Sciatic nerve (tissue), 2 donors: ENCODE measurements at regions of chr15 and their contacts with region 1.

Region 1: GRCh38 chr15:89760303-89761008 is 9.4 kb upstream of the MESP1 start:
- DNase-seq: peak; percentile 89
- ATAC-seq: peak; percentile 91

Region 2: GRCh38 chr15:88701561-88702095 is 1058.8 kb before region 1 on chr15:
- intact Hi-C with region 1: no loop called
- DNase-seq: no peak
- ATAC-seq: no peak

Region 3: DNA sequence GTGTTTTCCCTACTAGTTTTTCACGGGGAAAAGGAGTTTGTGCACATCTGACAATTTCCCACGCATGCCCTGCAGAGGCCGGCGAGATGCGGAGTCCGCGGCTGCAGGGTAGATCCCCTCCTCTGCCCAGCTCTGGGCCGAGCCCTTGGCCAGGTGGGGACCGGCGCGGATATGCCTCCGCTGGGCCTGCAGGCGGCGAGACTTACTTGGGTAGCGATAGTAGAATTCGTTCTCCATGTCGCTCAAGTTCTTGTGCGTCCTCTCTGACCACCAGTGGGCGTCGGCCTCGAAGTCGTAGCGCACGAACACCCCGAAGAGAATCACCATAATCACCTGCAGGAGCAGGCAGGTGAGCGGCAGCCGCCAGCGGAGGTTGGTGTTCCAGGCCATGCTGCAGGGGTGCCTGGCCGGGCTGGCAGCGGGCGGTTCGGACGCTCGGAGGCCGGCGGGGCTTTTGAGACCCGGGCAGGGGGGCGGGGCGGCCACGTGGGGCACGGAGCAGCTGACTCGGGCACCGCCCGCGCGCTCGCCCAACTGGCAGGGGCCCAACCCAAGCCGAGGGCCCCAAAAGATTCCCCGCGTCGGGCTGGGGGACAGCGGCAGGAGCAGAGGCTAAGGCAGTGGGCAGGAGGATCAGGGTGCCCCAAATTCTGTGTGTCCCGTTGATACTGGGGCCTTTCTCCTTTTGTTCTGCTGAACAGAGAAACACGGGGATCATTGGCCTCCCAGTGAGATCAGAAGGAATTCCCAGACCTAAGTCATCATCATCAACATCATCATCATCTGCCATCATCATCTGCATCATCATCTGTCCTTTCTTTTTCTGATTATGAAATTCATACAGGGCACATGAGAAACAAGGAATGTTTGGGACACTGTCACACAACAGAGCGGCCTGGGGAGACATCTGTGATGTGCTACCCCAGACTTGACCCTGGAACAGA is 264.0 kb before region 1 on chr15 and contains the start of gene RHCG:
- intact Hi-C with region 1: no loop called
- DNase-seq: peak; percentile 55
- ATAC-seq: no peak
- total RNA-seq, gene RHCG: not detected

Region 4: GRCh38 chr15:89874926-89875564 is 114.6 kb after region 1 on chr15:
- intact Hi-C with region 1: loop called (anchors 10 kb)
- DNase-seq: peak; percentile 92
- ATAC-seq: peak; percentile 97

Region 5: DNA sequence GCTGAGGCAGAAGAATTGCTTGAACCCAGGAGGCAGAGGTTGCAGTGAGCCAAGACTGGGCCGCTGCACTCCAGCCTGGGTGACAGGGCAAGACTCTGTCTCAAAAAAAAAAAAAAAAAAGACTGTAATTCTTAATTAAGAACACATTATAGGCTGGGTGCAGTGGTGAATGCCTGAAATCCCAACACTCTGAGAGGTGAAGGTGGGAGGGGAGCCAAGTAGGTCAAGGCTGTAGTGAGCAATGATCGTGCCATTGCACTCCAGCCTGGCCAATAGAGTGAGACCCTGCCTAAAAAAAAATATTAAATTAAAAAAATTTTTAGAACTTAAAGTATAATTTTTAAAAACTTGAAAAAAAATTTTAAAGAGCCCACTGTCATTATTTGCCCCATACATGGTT is 165.7 kb after region 1 on chr15:
- intact Hi-C with region 1: no loop called
- DNase-seq: no peak
- ATAC-seq: no peak

Region 6: GRCh38 chr15:90648137-90649070 is 887.9 kb after region 1 on chr15:
- intact Hi-C with region 1: no loop called
- DNase-seq: peak; percentile 87
- ATAC-seq: peak; percentile 93